Activated T-helper 2 cell treated with anti-CD3 and anti-CD28 coated beads, Interferon-gamma antibody, Interleukin-2, Interleukin-4, amounts not matched to agents 10 μg/mL and 5 μg/mL and 100 μg/mL, durations not matched to agents 14 hours and 24 hours and 36 hours (primary cell): ENCODE measurements at regions of chr2 and their contacts with region 1.

Region 1: DNA sequence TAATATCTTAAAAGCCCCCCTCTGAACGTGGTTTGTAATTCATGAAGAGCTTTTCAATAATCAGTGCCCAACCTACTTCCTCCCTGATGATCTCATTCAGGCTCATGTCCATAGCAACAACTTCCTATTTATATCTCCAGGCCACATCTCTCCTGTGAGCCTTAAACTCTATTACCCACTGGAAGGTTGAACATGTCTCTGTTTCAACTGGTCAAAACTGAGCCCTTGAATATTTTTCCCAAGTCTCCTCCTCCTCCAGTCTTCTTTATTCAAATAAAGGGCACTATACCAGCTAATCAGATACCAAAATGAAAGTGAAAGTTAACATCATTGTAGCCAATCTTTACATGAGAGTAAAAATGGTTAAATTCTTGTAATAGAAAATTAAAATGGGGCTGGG is 63.7 kb upstream of the ITGA4 start:
- DNase-seq: no peak
- H3K4me3 Mint-ChIP-seq: peak overlapping the region; percentile 37
- H3K27ac Mint-ChIP-seq: peak overlapping the region; percentile 58
- H3K4me1 Mint-ChIP-seq: peaks cover 33% of the 10 kb centered on the region
- H3K27me3 Mint-ChIP-seq: no peaks in the 10 kb centered on the region

Region 2: DNA sequence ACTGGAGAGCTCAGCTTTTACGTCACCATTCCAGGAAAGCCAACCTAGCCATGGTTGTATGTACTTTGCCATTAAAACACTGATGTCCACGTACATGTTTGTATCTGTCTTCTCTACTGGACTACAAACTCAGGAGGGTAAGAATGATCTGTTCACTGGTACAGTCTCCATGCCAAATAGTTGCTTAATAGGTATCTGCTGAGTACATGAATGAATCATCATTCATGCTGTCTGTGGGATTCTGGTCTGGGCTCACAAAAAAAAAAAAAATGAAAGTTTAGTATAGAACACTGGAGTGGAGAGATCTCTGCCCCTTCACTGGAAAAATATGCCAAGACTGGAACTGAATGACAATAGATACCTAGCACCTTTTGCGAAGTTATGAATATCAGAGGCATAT is 38.8 kb before region 1 on chr2:
- intact Hi-C with region 1: loop called (anchors 5 kb)
- DNase-seq: no peak
- H3K4me3 Mint-ChIP-seq: no peak overlapping the region
- H3K27ac Mint-ChIP-seq: no peak overlapping the region
- H3K4me1 Mint-ChIP-seq: peaks cover 41% of the 10 kb centered on the region
- H3K27me3 Mint-ChIP-seq: no peaks in the 10 kb centered on the region

Region 3: DNA sequence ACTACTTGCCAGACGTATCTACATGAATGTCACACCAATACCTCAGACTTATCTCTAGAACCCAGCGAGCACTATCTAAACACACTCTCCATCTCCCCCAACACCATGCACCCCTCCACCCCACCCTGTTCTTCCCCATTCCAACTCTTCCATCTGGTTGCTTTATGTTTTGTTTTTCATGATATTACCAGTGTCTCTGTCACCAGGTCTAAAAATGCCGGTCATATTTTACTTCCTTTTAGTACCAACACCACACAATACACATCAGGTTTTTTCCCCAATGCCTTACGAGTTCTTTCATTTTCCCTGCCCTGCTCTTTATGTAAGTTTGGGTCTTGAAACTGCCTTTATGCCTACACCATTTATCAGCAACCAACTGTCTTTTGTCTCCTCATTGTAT is 53.5 kb after region 1 on chr2:
- intact Hi-C with region 1: loop called (anchors 10 kb)
- DNase-seq: no peak
- H3K4me3 Mint-ChIP-seq: no peak overlapping the region
- H3K27ac Mint-ChIP-seq: peak overlapping the region; percentile 25
- H3K4me1 Mint-ChIP-seq: peaks cover 35% of the 10 kb centered on the region
- H3K27me3 Mint-ChIP-seq: no peaks in the 10 kb centered on the region